ENCODE measurements at regions of chr14 and their contacts with region 1.

Region 1: GRCh38 chr14:65824285-65824977 is 411.9 kb downstream of the FUT8 start:
- DNase-seq: peak; percentile 29 to 82 (median 42)
- ATAC-seq: peak; percentile 97
- H3K4me3 ChIP-seq: no peak overlapping the region
- H3K4me3 Mint-ChIP-seq: no peak overlapping the region
- H3K27ac ChIP-seq: no peak overlapping the region
- H3K27ac Mint-ChIP-seq: no peak overlapping the region
- H3K4me1 ChIP-seq: peaks cover 3% of the 10 kb centered on the region
- H3K4me1 Mint-ChIP-seq: peaks cover 13% of the 10 kb centered on the region
- H3K27me3 ChIP-seq: no peaks in the 10 kb centered on the region
- H3K27me3 Mint-ChIP-seq: no peaks in the 10 kb centered on the region
- CTCF ChIP-seq: peak; percentile 93

Region 2: GRCh38 chr14:65222440-65222858 is 602.0 kb before region 1 on chr14:
- CTCF ChIA-PET with region 1: no interaction called
- POLR2A ChIA-PET with region 1: interaction called, 3 read pairs
- intact Hi-C with region 1: loop called in 1 of 2 experiments (anchors 5 kb)
- DNase-seq: peak; percentile 22 to 75 (median 46)
- ATAC-seq: peak; percentile 79
- H3K4me3 ChIP-seq: no peak overlapping the region
- H3K4me3 Mint-ChIP-seq: no peak overlapping the region
- H3K27ac ChIP-seq: no peak overlapping the region
- H3K27ac Mint-ChIP-seq: peak overlapping the region; percentile 3
- H3K4me1 ChIP-seq: peaks cover 42% of the 10 kb centered on the region
- H3K4me1 Mint-ChIP-seq: peaks cover 33% of the 10 kb centered on the region
- H3K27me3 ChIP-seq: no peaks in the 10 kb centered on the region
- H3K27me3 Mint-ChIP-seq: no peaks in the 10 kb centered on the region
- CTCF ChIP-seq: peak; percentile 76

Region 3: GRCh38 chr14:65804752-65805473 is 19.5 kb before region 1 on chr14:
- CTCF ChIA-PET with region 1: interaction called, 10 read pairs
- POLR2A ChIA-PET with region 1: no interaction called
- intact Hi-C with region 1: no loop called
- DNase-seq: no peak
- ATAC-seq: no peak
- H3K4me3 ChIP-seq: no peak overlapping the region
- H3K4me3 Mint-ChIP-seq: no peak overlapping the region
- H3K27ac ChIP-seq: no peak overlapping the region
- H3K27ac Mint-ChIP-seq: no peak overlapping the region
- H3K4me1 ChIP-seq: no peaks in the 10 kb centered on the region
- H3K4me1 Mint-ChIP-seq: no peaks in the 10 kb centered on the region
- H3K27me3 ChIP-seq: no peaks in the 10 kb centered on the region
- H3K27me3 Mint-ChIP-seq: no peaks in the 10 kb centered on the region
- CTCF ChIP-seq: no peak

Region 4: DNA sequence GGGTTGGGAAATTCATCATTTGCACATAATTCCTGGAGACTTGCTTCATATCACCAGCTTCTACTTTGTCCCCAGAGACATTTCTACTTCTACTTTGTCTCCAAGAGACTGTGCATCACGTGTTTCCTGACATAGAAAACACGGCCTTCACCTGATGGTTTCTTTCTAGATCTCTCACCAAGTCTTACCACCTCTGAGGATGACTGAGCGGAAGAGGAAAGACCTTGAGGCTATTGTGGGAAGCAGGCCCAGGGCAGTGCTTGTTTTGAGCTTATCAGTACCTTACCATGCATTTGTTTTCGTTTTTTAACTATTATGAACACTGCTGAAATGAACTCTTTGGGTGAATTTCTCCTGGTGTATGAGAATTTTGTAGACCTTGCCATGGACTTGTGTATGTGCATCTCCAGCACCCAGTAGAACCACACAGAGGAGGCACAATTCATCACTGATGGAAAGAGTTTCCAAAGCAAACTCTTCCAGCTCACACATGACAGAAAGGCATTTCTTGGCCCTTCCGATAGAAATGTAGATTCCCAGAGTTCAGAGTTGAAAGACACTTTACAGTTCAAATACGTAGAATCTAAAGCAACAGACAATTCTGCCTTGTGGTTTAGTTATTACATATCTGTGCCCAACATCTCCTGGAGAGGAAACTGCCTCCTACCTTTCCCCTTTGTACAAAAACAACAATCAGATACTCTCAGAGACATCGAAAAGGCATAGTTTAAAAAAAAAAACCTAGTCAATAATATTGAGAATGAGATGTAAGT is 22.8 kb after region 1 on chr14:
- CTCF ChIA-PET with region 1: interaction called, 44 read pairs
- POLR2A ChIA-PET with region 1: interaction called, 27 read pairs
- intact Hi-C with region 1: no loop called
- DNase-seq: peak; percentile 43 to 95 (median 66)
- ATAC-seq: peak; percentile 81
- H3K4me3 ChIP-seq: peak overlapping the region; percentile 33
- H3K4me3 Mint-ChIP-seq: peak overlapping the region; percentile 62
- H3K27ac ChIP-seq: peak overlapping the region; percentile 83 to 87
- H3K27ac Mint-ChIP-seq: peak overlapping the region; percentile 91
- H3K4me1 ChIP-seq: peaks cover 78% of the 10 kb centered on the region
- H3K4me1 Mint-ChIP-seq: peaks cover 93% of the 10 kb centered on the region
- H3K27me3 ChIP-seq: no peaks in the 10 kb centered on the region
- H3K27me3 Mint-ChIP-seq: no peaks in the 10 kb centered on the region
- CTCF ChIP-seq: no peak

Region 5: GRCh38 chr14:65958664-65959562 is 134.5 kb after region 1 on chr14:
- CTCF ChIA-PET with region 1: interaction called, 10 read pairs
- POLR2A ChIA-PET with region 1: interaction called, 3 read pairs
- intact Hi-C with region 1: no loop called
- DNase-seq: peak in 4 of 14 experiments; percentile 5 to 68 (median 60)
- ATAC-seq: peak; percentile 58
- H3K4me3 ChIP-seq: no peak overlapping the region
- H3K4me3 Mint-ChIP-seq: no peak overlapping the region
- H3K27ac ChIP-seq: no peak overlapping the region
- H3K27ac Mint-ChIP-seq: no peak overlapping the region
- H3K4me1 ChIP-seq: peaks cover 27% of the 10 kb centered on the region
- H3K4me1 Mint-ChIP-seq: peaks cover 26% of the 10 kb centered on the region
- H3K27me3 ChIP-seq: no peaks in the 10 kb centered on the region
- H3K27me3 Mint-ChIP-seq: no peaks in the 10 kb centered on the region
- CTCF ChIP-seq: peak; percentile 83

Measured in CD4-positive, alpha-beta T cell (primary cell).